ENCODE measurements at regions of chr12 and their contacts with region 1.

Region 1: DNA sequence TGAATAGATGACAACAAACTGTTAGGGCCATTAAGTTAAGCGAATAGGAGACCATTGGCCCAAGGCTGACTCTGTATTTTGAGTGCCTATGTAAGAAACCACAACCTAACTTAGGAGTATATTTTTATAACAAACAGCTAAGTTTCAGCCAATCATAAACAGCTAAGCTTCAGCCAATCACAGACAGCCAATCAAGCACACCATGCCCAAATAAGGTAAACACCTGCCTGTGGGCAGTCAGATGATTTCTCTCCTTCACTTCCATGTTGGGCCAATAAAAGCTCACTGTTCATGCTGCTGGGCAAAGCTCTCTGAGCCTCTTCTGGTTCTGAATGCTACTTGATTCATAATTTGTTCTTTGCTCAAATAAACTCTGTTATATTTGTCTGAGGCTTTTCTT is 344.6 kb downstream of the BTG1 start:
- DNase-seq: no peak
- H3K4me3 Mint-ChIP-seq: no peak overlapping the region
- H3K27ac Mint-ChIP-seq: no peak overlapping the region
- H3K4me1 Mint-ChIP-seq: peaks cover 8% of the 10 kb centered on the region
- H3K27me3 Mint-ChIP-seq: no peaks in the 10 kb centered on the region

Region 2: GRCh38 chr12:91778091-91778832 is 22.8 kb before region 1 on chr12:
- CTCF ChIA-PET with region 1: no interaction called
- POLR2A ChIA-PET with region 1: no interaction called
- DNase-seq: peak; percentile 19
- H3K4me3 Mint-ChIP-seq: peak overlapping the region; percentile 45
- H3K27ac Mint-ChIP-seq: peak overlapping the region; percentile 90
- H3K4me1 Mint-ChIP-seq: peaks cover 34% of the 10 kb centered on the region
- H3K27me3 Mint-ChIP-seq: no peaks in the 10 kb centered on the region

Region 3: GRCh38 chr12:91811481-91812287 is 10.6 kb after region 1 on chr12:
- CTCF ChIA-PET with region 1: interaction called, 18 read pairs
- POLR2A ChIA-PET with region 1: no interaction called
- DNase-seq: peak; percentile 70
- H3K4me3 Mint-ChIP-seq: no peak overlapping the region
- H3K27ac Mint-ChIP-seq: no peak overlapping the region
- H3K4me1 Mint-ChIP-seq: peaks cover 5% of the 10 kb centered on the region
- H3K27me3 Mint-ChIP-seq: no peaks in the 10 kb centered on the region

Region 4: DNA sequence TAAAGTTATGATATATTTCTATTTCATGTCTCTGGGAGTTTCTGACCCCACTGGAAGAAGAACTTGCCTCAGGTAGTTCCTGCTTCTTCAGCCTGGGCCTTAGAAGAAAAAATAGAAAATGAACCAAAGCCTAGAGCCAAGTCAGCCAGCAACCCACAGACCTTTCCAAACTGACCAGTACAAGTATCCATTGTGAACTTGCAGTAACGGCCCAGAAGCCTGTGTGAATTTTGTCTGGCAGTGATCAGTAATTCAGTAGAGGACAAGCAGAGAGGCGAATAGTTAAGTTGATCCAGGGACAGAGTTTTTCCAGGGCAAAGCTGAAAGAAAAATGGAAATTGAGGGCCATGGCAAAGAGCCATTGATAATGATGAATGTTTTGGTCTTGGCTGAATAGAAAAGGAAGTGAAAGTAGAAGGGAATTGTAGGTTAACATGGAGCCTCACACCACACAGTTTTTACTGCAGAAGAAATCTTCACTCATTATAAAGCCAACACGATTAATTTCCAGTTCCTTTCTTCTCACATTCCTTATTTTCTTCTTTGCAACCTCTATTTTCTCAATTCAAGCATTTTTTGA is 32.8 kb after region 1 on chr12:
- CTCF ChIA-PET with region 1: no interaction called
- POLR2A ChIA-PET with region 1: no interaction called
- DNase-seq: no peak
- H3K4me3 Mint-ChIP-seq: no peak overlapping the region
- H3K27ac Mint-ChIP-seq: no peak overlapping the region
- H3K4me1 Mint-ChIP-seq: peaks cover 5% of the 10 kb centered on the region
- H3K27me3 Mint-ChIP-seq: no peaks in the 10 kb centered on the region

Region 5: DNA sequence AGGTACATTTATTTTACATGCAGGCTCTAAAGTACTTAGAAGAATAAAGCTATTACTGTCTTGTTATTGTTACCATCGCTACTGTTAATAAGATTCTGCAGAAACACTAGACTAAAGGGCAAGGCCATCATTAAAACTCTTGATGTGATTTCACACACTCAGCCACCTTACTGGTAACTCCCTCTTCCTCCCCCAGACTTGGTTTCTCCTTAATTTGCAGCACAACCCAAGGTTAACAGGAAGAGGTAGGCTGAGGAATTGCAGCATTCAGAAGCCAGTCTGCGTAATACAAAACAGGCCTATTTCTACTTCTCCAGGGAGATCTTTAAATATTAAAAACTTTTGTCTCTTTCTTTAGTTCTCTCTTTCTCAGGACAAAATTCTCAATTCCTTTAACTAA is 134.2 kb after region 1 on chr12:
- CTCF ChIA-PET with region 1: no interaction called
- POLR2A ChIA-PET with region 1: no interaction called
- DNase-seq: no peak
- H3K4me3 Mint-ChIP-seq: no peak overlapping the region
- H3K27ac Mint-ChIP-seq: no peak overlapping the region
- H3K4me1 Mint-ChIP-seq: no peaks in the 10 kb centered on the region
- H3K27me3 Mint-ChIP-seq: no peaks in the 10 kb centered on the region